Posterior cingulate gyrus (tissue), 11 donors: ENCODE measurements at regions of chr13 and their contacts with region 1.

Region 1: GRCh38 chr13:85405316-85405897 is 393.8 kb downstream of the SLITRK6 start:
- DNase-seq: peak in 8 of 10 donors; percentile 10 to 90 (median 28)

Region 2: GRCh38 chr13:85528491-85529215 is 123.2 kb after region 1 on chr13:
- intact Hi-C with region 1: loop called (anchors 5 kb)
- DNase-seq: no peak

Region 3: DNA sequence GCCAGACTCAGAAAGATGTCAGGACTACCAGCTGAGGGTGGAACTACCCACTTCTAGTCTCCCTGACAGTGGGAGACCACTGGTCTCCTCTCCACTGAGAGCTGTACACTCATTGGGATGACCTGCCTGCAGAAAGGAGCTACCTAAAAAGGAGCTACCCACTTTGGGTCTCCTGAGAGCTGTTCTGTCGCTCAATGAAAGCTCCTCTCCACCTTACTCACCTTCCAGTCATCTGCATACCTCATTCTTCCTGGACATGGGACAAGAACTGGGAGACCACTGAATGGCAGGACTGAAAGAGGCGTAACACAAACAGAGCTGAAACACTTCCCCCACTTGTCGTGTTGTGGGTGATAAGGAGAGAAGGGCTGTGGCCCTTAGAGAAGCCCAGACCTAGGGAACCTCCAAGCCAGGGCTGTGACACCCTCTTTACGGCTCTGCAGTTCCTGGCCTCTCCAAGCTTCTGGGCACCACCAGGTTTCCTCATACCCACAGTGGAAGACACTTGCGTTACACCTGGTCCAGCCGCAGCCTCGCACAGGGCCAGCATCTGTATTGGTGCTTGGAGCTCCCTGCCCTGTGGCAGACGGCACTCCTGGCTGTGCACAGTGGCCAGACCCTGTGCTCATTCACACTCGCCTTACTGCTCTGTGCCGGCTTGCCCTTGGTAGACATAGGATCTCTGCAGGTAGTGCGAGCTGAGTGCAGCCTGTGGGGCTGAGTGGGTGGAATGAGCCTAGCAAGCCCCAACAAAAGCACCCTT is 448.7 kb after region 1 on chr13:
- intact Hi-C with region 1: no loop called
- DNase-seq: peak in 2 of 10 donors; percentile 39 to 59